Activated CD4-positive, alpha-beta T cell treated with anti-CD3 and anti-CD28 coated beads for 36 hours (primary cell): ENCODE measurements at regions of chr22 and their contacts with region 1.

Region 1: DNA sequence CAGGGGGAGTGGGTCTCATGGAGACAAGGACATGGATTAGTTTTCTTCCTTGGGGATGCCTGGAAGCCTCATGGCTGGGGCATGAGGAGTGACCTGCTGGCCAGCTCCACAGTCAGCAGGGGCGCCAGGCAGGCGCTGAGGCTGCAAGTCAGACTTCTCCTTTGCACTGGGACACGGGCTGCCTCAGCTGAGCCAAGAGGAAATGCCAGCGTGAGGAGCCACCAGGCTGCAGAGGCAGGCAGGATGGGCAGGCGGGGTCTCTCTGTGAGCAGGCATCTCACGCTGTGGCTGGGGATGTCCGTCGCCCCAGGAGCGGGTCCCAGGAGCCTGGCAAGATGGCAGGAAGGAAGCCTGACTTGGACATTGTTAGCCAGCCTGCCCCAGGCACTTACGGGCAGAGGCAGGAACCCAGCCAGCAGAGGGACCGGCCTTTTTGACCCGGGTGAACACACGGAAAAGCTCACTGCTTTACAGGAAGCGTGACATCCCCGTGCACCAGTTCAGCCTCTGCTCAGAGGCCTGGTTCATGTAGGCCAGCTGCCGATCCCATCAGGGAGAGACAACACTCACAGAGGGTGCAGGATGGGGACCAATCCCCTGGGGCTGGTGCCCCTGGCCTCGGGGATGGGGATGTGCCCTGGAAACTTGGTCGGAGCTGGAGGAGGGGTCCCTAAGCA is 10.2 kb downstream of the GNB1L start:
- DNase-seq: peak; percentile 46
- ATAC-seq: peak; percentile 65
- H3K4me3 Mint-ChIP-seq: peak overlapping the region; percentile 20
- H3K27ac Mint-ChIP-seq: peak overlapping the region; percentile 29
- H3K4me1 Mint-ChIP-seq: peaks cover 19% of the 10 kb centered on the region
- H3K27me3 Mint-ChIP-seq: no peaks in the 10 kb centered on the region

Region 2: DNA sequence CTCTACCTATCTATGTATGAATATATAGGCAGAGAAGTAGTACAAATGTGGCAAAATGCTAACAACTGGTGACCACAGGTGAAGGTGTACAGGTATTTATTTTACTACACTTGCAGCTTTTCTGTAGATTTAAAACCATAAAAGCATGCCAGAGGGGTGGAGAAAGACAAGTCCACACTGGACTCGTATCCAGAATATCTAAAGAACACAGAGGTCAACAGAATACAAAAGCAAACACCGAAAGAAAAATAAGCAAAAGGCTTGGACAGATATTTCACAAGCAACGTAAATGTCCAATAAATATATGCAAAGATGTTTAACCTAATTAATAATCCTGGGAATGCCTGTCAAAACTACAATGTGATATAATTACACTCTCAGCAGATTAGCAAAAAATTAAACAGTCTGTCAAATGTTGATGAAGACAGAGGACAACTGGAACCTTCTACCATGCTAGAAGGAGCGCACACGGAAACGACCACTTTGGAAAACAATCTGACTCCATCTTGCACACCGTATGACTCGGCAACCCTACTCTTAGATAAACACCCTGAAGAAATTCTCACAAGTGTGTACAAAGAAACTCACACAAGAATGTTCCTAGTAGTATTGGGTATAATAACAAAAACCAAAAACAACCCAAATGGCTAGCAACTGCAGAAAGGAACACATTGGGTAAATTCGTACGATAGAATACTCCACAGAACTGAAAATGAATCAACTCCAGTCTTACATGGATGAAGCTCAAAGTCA is 17.1 kb before region 1 on chr22:
- CTCF ChIA-PET with region 1: no interaction called
- POLR2A ChIA-PET with region 1: no interaction called
- intact Hi-C with region 1: loop called in 1 of 2 experiments (anchors 2 kb)
- DNase-seq: no peak
- ATAC-seq: no peak
- H3K4me3 Mint-ChIP-seq: no peak overlapping the region
- H3K27ac Mint-ChIP-seq: no peak overlapping the region
- H3K4me1 Mint-ChIP-seq: peaks cover 5% of the 10 kb centered on the region
- H3K27me3 Mint-ChIP-seq: no peaks in the 10 kb centered on the region